WTC11 (cell line): ENCODE measurements at regions of chrX and their contacts with region 1.

Region 1: GRCh38 chrX:152915527-152916241 is 17.8 kb downstream of the ZNF185 start:
- DNase-seq: peak; percentile 54
- ATAC-seq: peak; percentile 83
- H3K4me3 Mint-ChIP-seq: no peak overlapping the region
- H3K27ac Mint-ChIP-seq: 0 out of 2 replicates have a peak overlapping the region, but pooled peaks have one; percentile 23
- H3K4me1 Mint-ChIP-seq: peaks cover 6% of the 10 kb centered on the region
- H3K27me3 Mint-ChIP-seq: no peaks in the 10 kb centered on the region
- CTCF ChIP-seq: peak; percentile 53; the same call in 1 of the 2 replicates

Region 2: GRCh38 chrX:152806035-152806434 is 109.6 kb before region 1 on chrX:
- CTCF ChIA-PET with region 1: no interaction called
- POLR2A ChIA-PET with region 1: no interaction called
- DNase-seq: no peak
- ATAC-seq: no peak
- H3K4me3 Mint-ChIP-seq: no peak overlapping the region
- H3K27ac Mint-ChIP-seq: no peak overlapping the region
- H3K4me1 Mint-ChIP-seq: no peaks in the 10 kb centered on the region
- H3K27me3 Mint-ChIP-seq: peaks cover 8% of the 10 kb centered on the region
- CTCF ChIP-seq: no peak

Region 3: GRCh38 chrX:152884171-152884570 is 31.5 kb before region 1 on chrX:
- CTCF ChIA-PET with region 1: interaction called, 17 read pairs
- POLR2A ChIA-PET with region 1: no interaction called
- DNase-seq: no peak
- ATAC-seq: peak; percentile 90
- H3K4me3 Mint-ChIP-seq: no peak overlapping the region
- H3K27ac Mint-ChIP-seq: no peak overlapping the region
- H3K4me1 Mint-ChIP-seq: peaks cover 21% of the 10 kb centered on the region
- H3K27me3 Mint-ChIP-seq: peaks cover 6% of the 10 kb centered on the region
- CTCF ChIP-seq: no peak

Region 4: GRCh38 chrX:152904151-152905080 is 11.3 kb before region 1 on chrX:
- CTCF ChIA-PET with region 1: interaction called, 42 read pairs
- POLR2A ChIA-PET with region 1: no interaction called
- DNase-seq: peak; percentile 75
- ATAC-seq: peak; percentile 60
- H3K4me3 Mint-ChIP-seq: peak overlapping the region; percentile 43
- H3K27ac Mint-ChIP-seq: no peak overlapping the region
- H3K4me1 Mint-ChIP-seq: peaks cover 32% of the 10 kb centered on the region
- H3K27me3 Mint-ChIP-seq: peaks cover 3% of the 10 kb centered on the region; the same call in 1 of the 2 replicates
- CTCF ChIP-seq: peak; percentile 58

Region 5: GRCh38 chrX:152926279-152926678 is 10.6 kb after region 1 on chrX:
- CTCF ChIA-PET with region 1: interaction called, 42 read pairs
- POLR2A ChIA-PET with region 1: no interaction called
- DNase-seq: peak; percentile 57
- ATAC-seq: peak; percentile 88
- H3K4me3 Mint-ChIP-seq: no peak overlapping the region
- H3K27ac Mint-ChIP-seq: no peak overlapping the region
- H3K4me1 Mint-ChIP-seq: peaks cover 6% of the 10 kb centered on the region
- H3K27me3 Mint-ChIP-seq: no peaks in the 10 kb centered on the region
- CTCF ChIP-seq: no peak

Region 6: DNA sequence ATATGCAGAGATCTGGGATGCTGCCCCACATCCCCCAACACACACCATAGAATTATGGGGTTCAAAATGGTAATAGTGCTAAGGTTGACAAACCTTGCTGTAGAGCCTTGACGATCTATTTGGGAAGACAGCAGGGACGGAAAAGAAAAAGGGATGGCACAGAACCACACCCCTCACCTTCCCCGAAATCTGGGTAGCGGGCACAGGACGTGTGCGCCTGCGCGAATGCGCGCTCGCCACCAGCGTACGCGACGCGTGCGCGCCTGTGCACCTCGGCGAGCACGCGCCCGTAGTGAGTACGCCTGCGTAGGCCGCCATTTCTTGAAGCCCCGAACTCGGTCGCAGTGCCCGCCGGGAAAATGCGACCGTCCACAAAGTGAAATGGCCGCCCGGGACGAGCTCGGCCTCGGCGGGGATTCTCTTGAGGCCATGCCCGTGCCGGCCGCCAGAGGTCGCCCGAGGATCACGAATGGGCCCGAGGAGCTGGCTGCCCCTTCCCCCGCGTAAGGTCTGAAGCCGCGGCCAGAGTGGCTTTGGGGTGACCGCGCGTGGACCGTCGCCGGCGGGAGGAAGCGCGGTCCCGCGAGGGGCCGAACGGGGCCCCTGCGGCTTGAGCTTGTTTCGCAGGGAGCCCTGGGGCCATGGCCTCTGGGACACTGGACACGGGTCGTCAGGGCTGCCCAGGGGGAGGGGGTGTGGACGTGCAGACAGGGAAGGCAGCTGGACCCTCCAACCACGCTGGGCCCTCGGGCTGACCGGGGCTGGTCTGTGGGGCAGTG is 25.8 kb after region 1 on chrX:
- CTCF ChIA-PET with region 1: interaction called, 14 read pairs
- POLR2A ChIA-PET with region 1: no interaction called
- DNase-seq: peak; percentile 84
- ATAC-seq: peak; percentile 85
- H3K4me3 Mint-ChIP-seq: peak overlapping the region; percentile 67
- H3K27ac Mint-ChIP-seq: no peak overlapping the region; the same call in 1 of the 2 replicates
- H3K4me1 Mint-ChIP-seq: peaks cover 12% of the 10 kb centered on the region
- H3K27me3 Mint-ChIP-seq: peaks cover 3% of the 10 kb centered on the region
- CTCF ChIP-seq: peak; percentile 73

Region 7: GRCh38 chrX:153164733-153165132 is 249.0 kb after region 1 on chrX:
- CTCF ChIA-PET with region 1: no interaction called
- POLR2A ChIA-PET with region 1: no interaction called
- DNase-seq: no peak
- ATAC-seq: no peak
- H3K4me3 Mint-ChIP-seq: no peak overlapping the region
- H3K27ac Mint-ChIP-seq: no peak overlapping the region
- H3K4me1 Mint-ChIP-seq: no peaks in the 10 kb centered on the region
- H3K27me3 Mint-ChIP-seq: peaks cover 4% of the 10 kb centered on the region; the same call in 1 of the 2 replicates
- CTCF ChIP-seq: no peak

Region 8: GRCh38 chrX:153400146-153401127 is 484.8 kb after region 1 on chrX:
- CTCF ChIA-PET with region 1: no interaction called
- POLR2A ChIA-PET with region 1: no interaction called
- DNase-seq: peak; percentile 73
- ATAC-seq: peak; percentile 84
- H3K4me3 Mint-ChIP-seq: no peak overlapping the region
- H3K27ac Mint-ChIP-seq: no peak overlapping the region
- H3K4me1 Mint-ChIP-seq: no peaks in the 10 kb centered on the region
- H3K27me3 Mint-ChIP-seq: peaks cover 5% of the 10 kb centered on the region; the same call in 1 of the 2 replicates
- CTCF ChIP-seq: peak; percentile 87